ENCODE measurements at regions of chr16 and their contacts with region 1.

Region 1: GRCh38 chr16:4307215-4308037 is 8.4 kb upstream of the GLIS2 start:
- DNase-seq: peak; percentile 97 to 99 (median 98)
- H3K4me3 ChIP-seq: peak overlapping the region; percentile 91
- H3K4me3 Mint-ChIP-seq: peak overlapping the region; percentile 86 to 98 (median 94)
- H3K27ac ChIP-seq: peak overlapping the region; percentile 91
- H3K27ac Mint-ChIP-seq: peak overlapping the region; percentile 97 to 100 (median 100)
- H3K4me1 ChIP-seq: peaks cover 19% of the 10 kb centered on the region
- H3K4me1 Mint-ChIP-seq: peaks cover 16 to 27% (median 18%) of the 10 kb centered on the region in 3 donors
- H3K27me3 ChIP-seq: no peaks in the 10 kb centered on the region
- H3K27me3 Mint-ChIP-seq: peaks cover 0 to 4% of the 10 kb centered on the region in 2 donors

Region 2: GRCh38 chr16:4271176-4272066 is 36.0 kb before region 1 on chr16:
- CTCF ChIA-PET with region 1: interaction called, 12 read pairs
- POLR2A ChIA-PET with region 1: interaction called, 8 read pairs
- DNase-seq: peak; percentile 80 to 91 (median 82)
- H3K4me3 ChIP-seq: peak overlapping the region; percentile 96
- H3K4me3 Mint-ChIP-seq: peak overlapping the region; percentile 86 to 99 (median 89)
- H3K27ac ChIP-seq: peak overlapping the region; percentile 80
- H3K27ac Mint-ChIP-seq: peak overlapping the region in 7 of 8 donors; percentile 42 to 98 (median 72)
- H3K4me1 ChIP-seq: peaks cover 10% of the 10 kb centered on the region
- H3K4me1 Mint-ChIP-seq: peaks cover 12 to 27% (median 14%) of the 10 kb centered on the region in 3 donors
- H3K27me3 ChIP-seq: no peaks in the 10 kb centered on the region
- H3K27me3 Mint-ChIP-seq: peaks cover 0 to 5% of the 10 kb centered on the region in 2 donors

Region 3: GRCh38 chr16:4288148-4288921 is 19.1 kb before region 1 on chr16:
- CTCF ChIA-PET with region 1: interaction called, 20 read pairs
- POLR2A ChIA-PET with region 1: no interaction called
- DNase-seq: peak; percentile 68 to 86 (median 76)
- H3K4me3 ChIP-seq: no peak overlapping the region
- H3K4me3 Mint-ChIP-seq: no peak overlapping the region
- H3K27ac ChIP-seq: no peak overlapping the region
- H3K27ac Mint-ChIP-seq: no peak overlapping the region
- H3K4me1 ChIP-seq: peaks cover 10% of the 10 kb centered on the region
- H3K4me1 Mint-ChIP-seq: peaks cover 6 to 14% (median 9%) of the 10 kb centered on the region in 3 donors
- H3K27me3 ChIP-seq: no peaks in the 10 kb centered on the region
- H3K27me3 Mint-ChIP-seq: peaks cover 9 to 34% of the 10 kb centered on the region in 2 donors

Region 4: DNA sequence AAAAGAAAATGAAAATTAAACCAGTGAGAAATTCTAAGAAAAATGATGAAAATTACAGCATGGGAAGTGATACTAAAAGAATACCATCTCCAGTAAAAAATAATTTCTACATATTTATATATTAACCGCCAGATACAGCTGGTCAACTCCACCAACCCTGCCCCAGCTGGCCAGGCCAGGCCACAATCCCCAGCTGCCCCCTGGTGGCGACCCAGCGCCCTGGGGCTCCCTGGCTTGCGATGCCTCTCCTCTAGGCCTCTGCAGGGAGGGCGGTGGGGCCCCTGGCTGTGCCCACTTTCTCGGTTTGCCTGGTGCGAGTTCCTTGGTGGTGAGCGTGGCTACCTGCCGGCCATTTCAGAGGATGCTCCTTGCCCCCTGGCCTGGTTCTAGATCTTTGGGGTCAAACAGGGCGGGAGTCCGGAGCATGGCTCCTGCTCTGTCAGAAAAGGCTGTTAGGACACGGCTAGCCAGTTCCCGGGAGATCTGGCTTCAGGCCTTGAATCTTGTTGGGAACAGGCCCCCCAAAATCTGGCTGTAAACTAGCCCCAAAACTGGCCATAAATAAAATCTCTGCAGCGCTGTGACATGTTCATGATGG is 22.9 kb after region 1 on chr16:
- CTCF ChIA-PET with region 1: interaction called, 22 read pairs
- POLR2A ChIA-PET with region 1: interaction called, 9 read pairs
- DNase-seq: peak; percentile 53 to 74 (median 68)
- H3K4me3 ChIP-seq: no peak overlapping the region
- H3K4me3 Mint-ChIP-seq: no peak overlapping the region
- H3K27ac ChIP-seq: no peak overlapping the region
- H3K27ac Mint-ChIP-seq: no peak overlapping the region
- H3K4me1 ChIP-seq: peaks cover 6% of the 10 kb centered on the region
- H3K4me1 Mint-ChIP-seq: peaks cover 0 to 10% (median 0%) of the 10 kb centered on the region in 3 donors
- H3K27me3 ChIP-seq: no peaks in the 10 kb centered on the region
- H3K27me3 Mint-ChIP-seq: peaks cover 0 to 7% of the 10 kb centered on the region in 2 donors

Region 5: GRCh38 chr16:4408323-4408690 is 100.9 kb after region 1 on chr16:
- CTCF ChIA-PET with region 1: no interaction called
- POLR2A ChIA-PET with region 1: no interaction called
- DNase-seq: peak in 1 of 5 donors; percentile 13
- H3K4me3 ChIP-seq: no peak overlapping the region
- H3K4me3 Mint-ChIP-seq: peak overlapping the region in 1 of 7 donors; percentile 32
- H3K27ac ChIP-seq: no peak overlapping the region
- H3K27ac Mint-ChIP-seq: peak overlapping the region in 1 of 8 donors; percentile 89
- H3K4me1 ChIP-seq: peaks cover 21% of the 10 kb centered on the region
- H3K4me1 Mint-ChIP-seq: peaks cover 25 to 46% (median 40%) of the 10 kb centered on the region in 3 donors
- H3K27me3 ChIP-seq: no peaks in the 10 kb centered on the region
- H3K27me3 Mint-ChIP-seq: peaks cover 0 to 3% of the 10 kb centered on the region in 2 donors

Measured in CD8-positive, alpha-beta memory T cell (primary cell).